HEK293 (cell line): ENCODE measurements at regions of chr18 and their contacts with region 1.

Region 1: DNA sequence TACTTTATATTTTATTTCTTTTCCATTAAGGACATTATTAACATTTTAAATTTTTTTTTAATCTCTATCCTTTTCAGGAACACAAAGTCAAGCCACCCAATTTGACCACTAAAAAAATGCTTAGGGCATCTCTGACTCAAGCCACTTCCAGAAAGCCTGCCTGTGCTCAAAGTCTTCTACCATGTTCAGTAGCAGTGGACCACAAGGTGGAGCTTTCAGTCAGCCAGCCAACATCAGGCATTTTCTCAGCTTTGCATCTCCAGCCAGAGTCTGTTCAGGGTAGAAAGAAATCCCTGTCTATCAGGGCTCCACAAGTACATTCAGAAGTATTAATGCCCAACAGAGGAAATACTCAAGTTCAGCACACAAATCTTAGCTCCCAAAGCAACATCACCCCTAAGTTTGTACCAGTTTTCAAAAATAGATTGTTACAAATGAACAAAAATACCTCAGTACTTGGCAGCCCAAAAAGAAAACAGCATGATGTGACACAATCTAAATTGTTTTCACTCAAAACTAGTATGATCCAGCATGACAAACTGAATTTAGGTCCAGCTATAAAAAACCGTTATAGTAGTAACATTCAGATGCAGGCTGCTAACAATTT is 37.6 kb downstream of the C18orf63 start:
- H3K4me3 ChIP-seq: no peak overlapping the region
- H3K27ac ChIP-seq: no peak overlapping the region
- H3K4me1 ChIP-seq: no peaks in the 10 kb centered on the region
- CTCF ChIP-seq: peak; percentile 56

Region 2: DNA sequence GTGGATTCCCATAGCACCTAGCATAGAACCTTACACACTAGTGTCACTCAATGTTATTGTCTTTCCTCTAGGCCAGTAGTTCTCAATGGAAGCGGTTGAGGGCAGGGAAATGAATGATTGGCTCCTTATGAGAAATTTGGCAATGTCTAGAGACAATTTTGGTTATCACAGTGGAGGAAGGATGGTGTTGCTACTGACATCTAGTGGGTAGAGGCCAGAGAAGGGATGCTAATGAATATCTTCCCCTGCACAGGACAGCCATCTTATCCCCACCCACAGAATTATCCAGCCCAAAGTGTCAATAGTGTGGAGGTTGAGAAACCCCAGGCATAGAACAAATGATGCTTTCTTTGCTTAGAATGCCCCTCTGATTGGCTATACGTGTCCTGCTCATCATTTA is 21.9 kb before region 1 on chr18:
- CTCF ChIA-PET with region 1: no interaction called
- POLR2A ChIA-PET with region 1: no interaction called
- H3K4me3 ChIP-seq: no peak overlapping the region
- H3K27ac ChIP-seq: no peak overlapping the region
- H3K4me1 ChIP-seq: no peaks in the 10 kb centered on the region
- CTCF ChIP-seq: peak; percentile 41; the same call in 1 of the 2 replicates

Region 3: DNA sequence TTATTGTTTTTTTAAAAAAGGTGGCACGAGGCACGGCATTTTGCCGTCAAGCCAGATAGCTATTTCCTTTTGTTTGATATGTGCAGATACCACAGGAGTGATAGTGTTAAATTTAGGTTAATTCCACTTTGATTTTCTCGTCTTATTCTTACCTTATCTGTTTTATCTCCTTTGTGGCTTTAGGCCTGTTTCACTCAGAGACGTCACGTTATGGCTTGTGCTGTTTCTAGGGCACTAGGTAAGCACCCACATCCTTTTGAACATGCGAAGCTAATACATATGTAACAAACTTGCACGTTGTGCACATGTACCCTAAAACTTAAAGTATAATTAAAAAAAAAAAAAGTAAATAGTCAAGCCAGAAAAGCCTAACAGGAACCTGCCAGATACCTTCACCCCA is 20.2 kb after region 1 on chr18:
- CTCF ChIA-PET with region 1: interaction called, 11 read pairs
- POLR2A ChIA-PET with region 1: no interaction called
- H3K4me3 ChIP-seq: no peak overlapping the region
- H3K27ac ChIP-seq: no peak overlapping the region
- H3K4me1 ChIP-seq: no peaks in the 10 kb centered on the region
- CTCF ChIP-seq: no peak

Region 4: DNA sequence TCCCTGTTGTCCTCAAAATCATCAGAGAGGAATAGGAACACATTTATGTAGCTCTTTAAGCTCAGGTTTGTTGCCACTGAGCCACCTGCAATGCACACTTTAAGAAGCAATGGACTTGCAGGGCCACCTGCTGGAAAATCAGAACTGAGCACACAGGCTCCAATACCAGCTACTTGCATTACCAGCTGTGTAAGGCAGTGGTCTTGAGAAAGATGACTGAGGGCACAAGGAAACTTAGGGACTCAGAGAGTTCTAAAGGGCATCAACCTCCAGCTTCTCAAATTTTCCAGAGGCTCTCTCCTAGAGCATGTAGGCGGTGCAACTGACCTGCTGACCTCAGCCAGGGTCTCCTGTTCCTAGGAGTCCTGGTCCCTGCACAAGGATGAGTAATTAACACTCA is 140.4 kb after region 1 on chr18:
- CTCF ChIA-PET with region 1: interaction called, 63 read pairs
- POLR2A ChIA-PET with region 1: no interaction called
- H3K4me3 ChIP-seq: no peak overlapping the region
- H3K27ac ChIP-seq: no peak overlapping the region
- H3K4me1 ChIP-seq: 0 out of 2 replicates have a peak, but pooled peaks cover 3% of the 10 kb centered on the region
- CTCF ChIP-seq: peak; percentile 73